ENCODE measurements at regions of chr11 and their contacts with region 1.

Region 1: DNA sequence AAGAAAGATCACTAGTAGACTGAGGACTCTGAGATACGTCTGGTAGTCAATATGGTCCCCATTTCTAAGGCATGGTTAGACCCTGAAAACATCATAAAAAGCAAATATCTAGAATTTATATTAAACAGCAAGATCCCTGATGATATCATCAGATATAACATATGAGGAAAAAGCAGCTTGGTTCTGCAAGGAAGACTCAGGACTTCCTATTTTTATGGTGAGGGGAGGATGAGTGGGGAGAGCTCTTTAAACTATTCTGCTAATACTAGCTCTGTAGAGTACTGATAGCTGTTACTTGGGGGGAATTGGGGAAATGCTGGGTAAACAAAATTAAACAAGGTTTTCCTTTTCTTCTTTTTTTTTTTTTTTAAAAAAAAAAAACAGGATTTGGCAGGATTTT is 235.8 kb downstream of the SWAP70 start:
- DNase-seq: no peak
- H3K4me3 ChIP-seq: no peak overlapping the region
- H3K4me3 Mint-ChIP-seq: no peak overlapping the region
- H3K27ac Mint-ChIP-seq: peak overlapping the region; percentile 27
- H3K4me1 ChIP-seq: peaks cover 37% of the 10 kb centered on the region
- H3K4me1 Mint-ChIP-seq: peaks cover 32% of the 10 kb centered on the region
- H3K27me3 ChIP-seq: no peaks in the 10 kb centered on the region
- H3K27me3 Mint-ChIP-seq: no peaks in the 10 kb centered on the region
- CTCF ChIP-seq: no peak

Region 2: DNA sequence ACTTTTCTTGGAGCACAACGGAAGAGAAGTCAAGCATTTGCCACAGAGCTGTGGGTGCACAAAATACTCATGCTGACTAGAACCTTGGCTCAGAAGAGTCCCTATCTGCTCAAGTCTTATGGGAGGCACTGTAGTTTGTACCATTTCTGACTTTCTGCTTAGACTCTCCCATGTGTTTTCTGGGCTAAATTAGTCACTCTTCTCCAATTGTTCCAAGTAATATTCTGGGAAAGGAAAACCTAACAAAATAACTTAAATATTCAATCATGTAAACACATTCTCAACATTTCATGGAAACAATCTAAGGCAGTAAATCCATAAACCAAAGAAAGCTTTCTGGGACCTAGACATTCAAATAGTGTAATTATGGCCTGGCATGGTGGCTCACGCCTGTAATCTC is 15.1 kb before region 1 on chr11:
- CTCF ChIA-PET with region 1: no interaction called
- POLR2A ChIA-PET with region 1: interaction called, 11 read pairs
- intact Hi-C with region 1: no loop called
- DNase-seq: no peak
- H3K4me3 ChIP-seq: no peak overlapping the region
- H3K4me3 Mint-ChIP-seq: no peak overlapping the region
- H3K27ac Mint-ChIP-seq: no peak overlapping the region
- H3K4me1 ChIP-seq: peaks cover 11% of the 10 kb centered on the region
- H3K4me1 Mint-ChIP-seq: peaks cover 22% of the 10 kb centered on the region
- H3K27me3 ChIP-seq: no peaks in the 10 kb centered on the region
- H3K27me3 Mint-ChIP-seq: no peaks in the 10 kb centered on the region
- CTCF ChIP-seq: no peak